ENCODE measurements at regions of chr2 and their contacts with region 1.

Region 1: DNA sequence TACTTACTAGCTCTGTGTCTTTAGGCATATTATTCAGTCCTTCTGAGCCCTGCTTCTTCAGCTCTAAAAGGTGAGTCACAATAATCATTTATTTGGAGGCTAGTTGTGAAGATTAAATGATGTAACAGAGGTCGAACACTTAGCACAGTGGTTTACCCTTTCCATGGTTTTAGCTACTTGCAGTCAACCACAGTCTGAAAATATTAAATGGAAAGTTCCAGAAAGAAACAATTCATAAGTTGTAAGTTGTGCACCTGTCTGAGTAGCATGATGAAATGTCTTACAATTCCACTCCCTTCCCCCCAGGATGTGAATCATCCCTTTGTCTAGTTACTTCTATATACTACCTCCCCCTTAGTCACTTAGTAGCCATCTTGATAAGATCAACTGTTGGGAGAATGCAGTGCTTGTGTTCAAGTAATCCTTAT is 217.6 kb upstream of the THUMPD2 start:
- DNase-seq: peak; percentile 28
- H3K4me3 Mint-ChIP-seq: no peak overlapping the region
- H3K27ac Mint-ChIP-seq: peak overlapping the region; percentile 73
- H3K4me1 Mint-ChIP-seq: peaks cover 8% of the 10 kb centered on the region
- H3K27me3 Mint-ChIP-seq: no peaks in the 10 kb centered on the region

Region 2: DNA sequence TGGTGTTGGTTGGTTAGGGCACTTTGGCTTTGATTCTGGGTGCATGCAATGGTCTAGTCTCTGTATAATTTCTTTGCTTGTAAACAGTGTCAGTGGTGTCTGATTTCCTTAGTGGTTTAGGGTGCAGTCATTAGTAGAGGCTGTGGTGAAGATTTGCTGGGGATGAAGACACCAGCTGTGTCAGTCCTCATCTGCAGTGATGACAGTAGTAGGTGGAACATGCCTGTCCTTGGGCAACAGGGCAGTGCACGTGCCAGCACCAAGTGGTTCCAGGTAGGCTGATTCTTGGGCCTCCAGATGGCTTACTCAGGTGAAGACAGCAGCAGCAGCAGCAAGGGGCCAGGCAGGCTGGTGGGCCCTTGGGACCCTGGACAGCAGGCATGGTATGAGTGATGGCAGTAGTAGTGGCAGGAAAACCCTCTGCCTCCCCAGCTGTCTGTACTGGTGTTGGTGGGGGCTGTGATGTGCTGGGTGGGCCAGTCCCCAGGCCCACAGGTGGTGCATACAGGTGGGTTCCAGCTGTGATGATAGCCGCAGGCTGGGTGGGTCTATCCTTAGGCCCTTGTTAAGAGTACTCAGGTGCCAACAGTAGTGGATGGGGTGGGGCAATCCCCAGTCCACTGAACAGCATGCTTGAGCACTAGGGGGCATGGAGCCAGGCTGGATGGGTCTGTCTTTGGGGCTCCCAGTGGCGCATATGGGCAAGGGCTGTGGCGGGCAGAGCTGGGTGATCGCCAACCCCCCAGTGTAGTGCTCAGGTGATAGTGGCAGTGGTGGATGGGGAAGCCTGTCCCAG is 77.0 kb before region 1 on chr2:
- CTCF ChIA-PET with region 1: no interaction called
- intact Hi-C with region 1: loop called (anchors 5 kb)
- DNase-seq: no peak
- H3K4me3 Mint-ChIP-seq: peak overlapping the region; percentile 17
- H3K27ac Mint-ChIP-seq: no peak overlapping the region
- H3K4me1 Mint-ChIP-seq: peaks cover 6% of the 10 kb centered on the region
- H3K27me3 Mint-ChIP-seq: peaks cover 2% of the 10 kb centered on the region

Region 3: DNA sequence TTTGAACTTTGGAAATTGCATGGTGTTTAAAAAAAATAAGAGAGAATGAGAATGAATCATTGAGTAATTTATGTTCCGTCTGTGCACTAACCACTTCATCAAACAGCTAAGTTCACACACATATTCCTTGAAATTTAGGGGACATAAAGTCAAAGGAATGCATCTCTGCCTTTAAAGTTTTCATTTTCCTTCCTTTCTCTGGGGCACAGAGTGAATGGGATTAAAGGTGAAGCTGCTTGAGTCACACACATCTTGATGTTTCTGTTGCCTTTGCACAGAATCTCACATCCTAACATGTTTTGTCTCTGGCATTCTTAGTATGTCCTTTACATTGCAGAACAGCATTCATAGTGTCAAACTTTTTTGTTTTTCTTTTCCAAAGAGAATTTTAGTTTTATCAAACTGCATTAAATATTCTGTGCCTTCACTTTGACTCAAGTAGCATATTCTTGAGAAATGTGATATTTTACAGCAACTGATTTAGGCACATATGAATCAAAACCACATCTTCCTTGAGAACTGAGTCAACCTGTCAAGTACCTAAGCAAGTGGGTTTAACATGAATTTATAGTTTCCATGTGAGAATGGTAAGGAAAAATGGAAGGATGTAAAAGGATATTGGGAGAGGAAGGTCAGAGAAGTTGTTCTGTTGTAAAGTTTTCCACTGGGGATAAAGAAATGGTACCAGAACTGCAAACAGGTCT is 48.5 kb before region 1 on chr2:
- CTCF ChIA-PET with region 1: no interaction called
- intact Hi-C with region 1: loop called (anchors 1 kb)
- DNase-seq: no peak
- H3K4me3 Mint-ChIP-seq: no peak overlapping the region
- H3K27ac Mint-ChIP-seq: peak overlapping the region; percentile 91
- H3K4me1 Mint-ChIP-seq: peaks cover 28% of the 10 kb centered on the region
- H3K27me3 Mint-ChIP-seq: no peaks in the 10 kb centered on the region

Region 4: DNA sequence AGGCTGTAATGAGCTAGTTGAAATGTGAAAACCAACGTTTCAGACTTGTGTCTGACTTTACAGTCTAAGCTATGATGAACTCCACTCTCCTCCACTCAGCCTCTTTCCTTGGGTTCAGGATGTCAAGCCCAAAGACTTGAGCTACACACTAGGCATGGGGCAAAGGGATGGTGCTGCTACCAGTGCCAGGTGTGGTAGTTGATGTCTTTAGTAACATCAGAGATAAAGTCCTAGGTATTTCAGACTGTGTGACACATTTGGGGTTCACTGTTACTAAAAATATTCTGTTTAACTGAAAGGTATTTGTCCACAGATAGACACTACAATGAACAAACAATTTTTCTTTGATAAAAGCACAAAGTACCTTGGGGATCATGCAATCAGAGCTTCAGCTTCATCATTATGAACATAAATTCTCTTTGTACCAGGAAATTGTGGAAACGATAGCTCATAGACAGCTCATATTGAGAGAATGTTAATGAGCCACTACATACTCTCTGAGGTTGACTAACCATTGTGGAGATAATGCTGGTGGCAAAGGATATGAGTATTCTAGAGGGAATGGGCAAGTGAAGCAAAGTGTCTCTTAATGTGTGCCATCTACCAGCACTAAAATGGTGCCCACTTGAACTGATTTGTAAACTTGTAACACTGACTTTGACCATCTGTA is 36.1 kb after region 1 on chr2:
- CTCF ChIA-PET with region 1: no interaction called
- intact Hi-C with region 1: loop called (anchors 1 kb)
- DNase-seq: no peak
- H3K4me3 Mint-ChIP-seq: no peak overlapping the region
- H3K27ac Mint-ChIP-seq: peak overlapping the region; percentile 74
- H3K4me1 Mint-ChIP-seq: peaks cover 7% of the 10 kb centered on the region
- H3K27me3 Mint-ChIP-seq: no peaks in the 10 kb centered on the region

Region 5: DNA sequence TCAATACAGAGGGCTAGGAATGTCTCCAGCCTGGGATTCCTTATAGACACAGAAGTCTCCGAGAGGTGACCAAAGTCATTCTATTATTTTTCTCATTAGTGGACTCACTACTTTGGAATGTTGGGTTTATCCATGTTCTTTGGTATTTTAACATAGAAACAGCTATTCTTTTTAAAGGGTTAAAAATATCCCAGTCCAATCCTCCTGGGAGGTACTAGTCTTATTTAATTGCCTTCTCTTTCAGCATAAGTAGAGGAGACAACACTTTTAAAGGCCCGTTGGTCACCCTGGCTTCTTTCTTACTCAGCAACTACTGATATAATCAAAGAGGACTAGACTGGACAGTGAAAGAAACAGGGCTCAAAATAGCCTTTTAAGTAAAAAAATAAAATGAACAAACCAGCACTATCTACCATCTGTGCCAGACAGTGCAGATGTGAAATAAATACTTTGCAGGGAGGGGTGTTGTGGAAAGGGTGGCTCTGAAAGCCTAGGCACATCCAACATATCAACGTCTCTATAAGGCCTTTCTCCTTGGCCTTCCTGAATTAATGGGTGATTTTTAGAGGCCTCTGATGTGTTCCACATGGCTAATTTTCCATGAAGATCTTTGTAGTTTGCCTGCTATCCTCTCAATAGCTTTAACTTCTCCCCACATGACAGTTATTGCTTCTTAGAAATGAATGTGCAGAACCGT is 116.8 kb after region 1 on chr2:
- CTCF ChIA-PET with region 1: no interaction called
- intact Hi-C with region 1: no loop called
- DNase-seq: no peak
- H3K4me3 Mint-ChIP-seq: no peak overlapping the region
- H3K27ac Mint-ChIP-seq: no peak overlapping the region
- H3K4me1 Mint-ChIP-seq: no peaks in the 10 kb centered on the region
- H3K27me3 Mint-ChIP-seq: no peaks in the 10 kb centered on the region

Region 6: DNA sequence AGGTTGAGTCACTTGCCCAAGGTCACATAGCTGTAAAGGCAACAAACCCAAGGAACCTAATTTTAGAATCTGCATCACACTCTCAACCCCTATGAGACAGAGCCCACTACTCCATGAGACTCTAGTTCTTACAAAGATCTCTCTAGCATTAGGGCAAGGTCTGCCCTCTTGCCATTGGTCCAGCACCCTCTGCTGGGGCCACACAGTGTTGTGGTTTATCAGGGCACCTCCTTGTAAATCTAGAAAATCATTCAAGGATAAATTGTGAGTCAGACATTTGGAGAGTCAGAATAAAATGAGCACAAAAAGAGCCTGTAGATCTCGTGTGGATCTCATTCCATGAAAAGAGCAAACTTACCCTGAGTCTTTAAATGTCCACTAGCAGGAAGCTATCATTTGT is 364.0 kb after region 1 on chr2:
- CTCF ChIA-PET with region 1: no interaction called
- intact Hi-C with region 1: no loop called
- DNase-seq: no peak
- H3K4me3 Mint-ChIP-seq: no peak overlapping the region
- H3K27ac Mint-ChIP-seq: no peak overlapping the region
- H3K4me1 Mint-ChIP-seq: peaks cover 5% of the 10 kb centered on the region
- H3K27me3 Mint-ChIP-seq: no peaks in the 10 kb centered on the region